HEK293T (cell line): ENCODE measurements at regions of chr22 and their contacts with region 1.

Region 1: DNA sequence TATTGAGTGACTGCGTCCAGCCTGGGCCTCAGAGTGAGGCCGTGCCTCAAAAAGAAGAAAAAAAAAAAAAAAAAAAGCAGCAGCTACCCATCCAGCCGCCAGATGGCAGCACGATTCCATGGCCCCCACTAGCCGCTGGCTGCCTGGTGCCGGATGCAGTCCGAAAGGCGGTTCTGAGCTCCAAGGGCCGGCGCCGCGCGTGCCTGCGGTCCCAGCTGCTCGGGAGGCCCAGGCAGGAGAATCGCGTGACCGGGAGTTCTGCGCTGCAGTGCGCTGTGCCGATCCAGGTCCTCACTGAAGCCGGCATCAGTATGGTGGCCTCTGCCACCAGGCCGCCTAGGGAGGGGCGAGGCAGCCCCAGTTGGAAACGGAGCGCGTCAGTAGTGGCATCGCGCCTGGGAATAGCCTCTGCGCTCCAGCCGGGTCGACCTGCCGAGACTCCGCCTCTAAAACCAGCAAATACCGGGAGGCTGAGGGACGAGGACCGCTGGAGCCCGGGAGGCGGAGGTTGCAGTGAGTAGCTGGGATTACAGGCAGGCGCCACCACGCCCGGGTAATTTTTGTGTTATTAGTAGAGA is 19.3 kb downstream of the SCARF2 start:
- DNase-seq: peak; percentile 91

Region 2: GRCh38 chr22:20164863-20165262 is 253.4 kb before region 1 on chr22:
- CTCF ChIA-PET with region 1: no interaction called
- POLR2A ChIA-PET with region 1: no interaction called
- DNase-seq: no peak

Region 3: DNA sequence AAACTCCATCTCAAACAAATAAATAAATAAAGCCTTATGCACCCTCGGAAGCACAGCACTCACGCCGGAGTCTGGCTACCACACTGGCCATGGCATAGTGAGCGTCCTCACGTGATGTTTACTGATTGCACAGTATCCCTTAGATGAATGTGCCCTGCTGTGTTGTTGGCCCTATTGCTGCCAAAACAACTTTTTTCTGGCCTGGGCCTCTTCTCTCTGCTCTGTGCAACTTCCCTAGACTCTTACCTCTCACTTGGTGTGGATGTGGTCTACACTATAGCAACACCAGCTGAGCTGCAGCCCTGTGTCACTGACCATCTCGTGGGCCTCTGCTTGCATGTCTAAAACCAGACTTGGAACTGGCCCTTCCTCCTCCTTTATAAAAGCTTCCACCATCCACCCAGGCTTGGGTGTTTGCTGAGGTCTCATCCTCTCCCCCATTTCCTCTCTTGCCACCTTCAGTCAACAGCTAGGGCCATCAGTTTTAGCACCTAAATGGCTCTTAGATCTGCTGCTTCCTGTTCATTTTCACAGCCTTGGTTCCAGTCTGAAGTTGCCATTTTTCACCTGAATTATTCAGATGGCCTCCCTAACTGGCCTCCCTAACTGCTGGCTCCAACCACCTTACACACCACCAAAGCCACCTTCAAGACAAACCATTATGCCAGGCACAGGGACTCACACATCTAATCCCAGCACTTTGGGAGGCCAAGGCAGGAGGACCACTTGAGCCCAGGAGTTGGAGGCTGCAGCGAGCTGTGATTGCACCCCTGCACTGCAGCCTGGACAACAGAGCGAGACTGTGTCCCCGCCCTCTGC is 15.1 kb before region 1 on chr22:
- CTCF ChIA-PET with region 1: no interaction called
- POLR2A ChIA-PET with region 1: no interaction called
- DNase-seq: no peak

Region 4: DNA sequence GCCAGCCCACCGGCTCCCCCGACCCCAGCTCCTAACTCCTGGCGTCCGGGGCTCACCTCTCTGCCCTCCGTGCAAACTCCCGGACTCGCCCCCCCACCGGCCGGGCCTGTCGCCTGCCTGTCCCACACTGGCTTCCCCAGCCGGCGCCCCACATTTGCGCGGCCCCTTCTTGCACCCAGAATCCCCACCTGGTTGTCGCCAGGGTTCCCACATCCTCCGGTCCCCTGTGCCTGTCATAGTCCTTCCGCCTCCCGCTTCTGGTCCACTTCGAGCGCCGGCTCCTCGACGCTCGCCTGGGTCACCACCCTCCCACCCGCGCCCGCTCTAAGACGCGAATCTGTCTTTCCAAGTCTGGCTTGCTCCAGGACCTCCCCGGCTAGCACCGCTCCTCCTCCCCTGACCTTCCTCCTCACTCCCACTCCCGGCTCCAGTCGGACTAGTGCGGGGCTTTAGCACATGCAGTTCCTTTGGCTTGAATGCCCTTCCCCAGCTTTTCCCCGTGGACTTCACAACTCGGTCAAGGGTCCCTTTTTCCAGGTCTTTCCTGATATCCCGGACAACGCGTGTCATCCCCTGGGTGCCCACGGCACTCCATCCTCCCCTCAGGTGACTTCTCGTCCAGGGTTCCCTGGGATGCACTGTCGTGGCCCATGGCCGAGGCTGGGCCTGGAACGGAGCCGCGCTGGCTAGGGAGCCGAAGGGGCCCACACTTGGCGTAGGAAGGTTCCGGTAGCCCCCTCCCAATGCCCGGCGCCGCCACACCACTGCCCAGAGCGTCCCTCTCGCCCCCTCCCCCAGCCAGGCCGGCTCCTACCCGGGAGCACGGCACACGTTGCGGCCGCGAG is 18.7 kb after region 1 on chr22:
- CTCF ChIA-PET with region 1: interaction called, 17 read pairs
- POLR2A ChIA-PET with region 1: interaction called, 4 read pairs
- DNase-seq: peak; percentile 52

Region 5: GRCh38 chr22:20456064-20456721 is 37.9 kb after region 1 on chr22:
- CTCF ChIA-PET with region 1: interaction called, 26 read pairs
- POLR2A ChIA-PET with region 1: interaction called, 8 read pairs
- DNase-seq: peak; percentile 94